Endothelial cell of umbilical vein (primary cell): ENCODE measurements at regions of chr17 and their contacts with region 1.

Region 1: DNA sequence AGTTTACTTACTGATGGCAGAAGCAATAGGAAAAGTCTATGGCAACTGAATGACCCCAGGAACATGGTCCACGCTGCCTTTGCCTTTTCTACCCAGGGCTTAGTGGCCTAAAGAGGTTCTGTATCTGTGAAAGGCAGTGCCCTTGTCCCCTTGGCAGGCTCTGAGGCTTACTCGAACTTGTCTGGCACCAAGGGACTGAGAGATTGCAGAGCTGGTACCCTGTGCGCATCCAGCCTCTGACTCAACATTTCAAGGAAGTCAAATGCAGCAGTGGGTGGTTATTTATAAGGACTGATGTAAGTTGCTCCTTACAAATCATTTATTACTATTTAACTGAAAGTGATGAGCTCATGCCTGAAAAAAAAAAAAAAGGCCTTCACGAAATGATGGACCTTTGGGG is 299.9 kb upstream of the MYOCD start:
- DNase-seq: no peak
- H3K4me3 ChIP-seq: no peak overlapping the region
- H3K27ac ChIP-seq: no peak overlapping the region
- H3K4me1 ChIP-seq: no peaks in the 10 kb centered on the region
- H3K27me3 ChIP-seq: no peaks in the 10 kb centered on the region
- CTCF ChIP-seq: no peak
- POLR2A ChIP-seq: no peak

Region 2: DNA sequence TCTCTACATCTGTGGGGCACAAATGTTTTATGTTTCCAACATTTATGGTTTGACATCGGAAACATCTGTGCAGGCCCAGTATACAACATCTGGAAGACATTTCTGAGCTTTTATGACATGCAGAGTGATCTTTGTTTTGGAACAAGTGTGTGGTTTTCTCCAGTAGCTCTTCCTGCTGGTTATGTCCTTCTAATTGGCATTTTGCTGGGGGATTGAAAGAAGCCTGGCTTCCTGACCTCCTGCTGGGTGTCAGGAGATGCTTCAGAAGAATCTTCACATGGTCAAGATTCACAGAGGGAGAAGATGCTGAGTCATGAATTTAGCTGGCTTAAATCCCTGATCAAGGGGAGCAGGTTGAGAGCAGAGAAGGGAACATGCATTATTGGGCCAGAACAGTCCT is 20.4 kb after region 1 on chr17:
- CTCF ChIA-PET with region 1: no interaction called
- POLR2A ChIA-PET with region 1: no interaction called
- dilution Hi-C with region 1: no loop called
- intact Hi-C with region 1: no loop called
- DNase-seq: no peak
- H3K4me3 ChIP-seq: no peak overlapping the region
- H3K27ac ChIP-seq: no peak overlapping the region
- H3K4me1 ChIP-seq: no peaks in the 10 kb centered on the region
- H3K27me3 ChIP-seq: no peaks in the 10 kb centered on the region
- CTCF ChIP-seq: no peak
- POLR2A ChIP-seq: no peak

Region 3: DNA sequence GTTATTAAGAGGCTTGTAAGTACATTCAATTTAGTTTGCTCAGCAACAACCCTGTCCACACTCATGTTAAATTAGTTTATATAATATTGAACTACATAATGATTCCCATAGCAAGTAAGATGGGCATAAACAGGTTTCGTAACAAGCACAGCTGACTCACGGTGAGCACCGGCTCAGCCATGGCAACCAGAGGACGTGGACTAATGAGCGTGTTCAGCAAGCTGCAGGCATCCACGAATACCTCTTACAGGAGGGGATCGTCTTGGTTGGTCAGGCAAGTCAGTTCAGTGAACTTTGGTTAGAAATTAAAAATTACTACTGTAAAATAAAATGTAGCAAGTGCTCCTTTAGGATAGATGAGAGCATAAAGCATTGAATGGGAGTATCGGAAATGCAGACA is 593.6 kb after region 1 on chr17:
- CTCF ChIA-PET with region 1: no interaction called
- POLR2A ChIA-PET with region 1: no interaction called
- dilution Hi-C with region 1: no loop called
- intact Hi-C with region 1: loop called (anchors 5 kb)
- DNase-seq: no peak
- H3K4me3 ChIP-seq: no peak overlapping the region
- H3K27ac ChIP-seq: no peak overlapping the region
- H3K4me1 ChIP-seq: no peaks in the 10 kb centered on the region
- H3K27me3 ChIP-seq: no peaks in the 10 kb centered on the region
- CTCF ChIP-seq: no peak
- POLR2A ChIP-seq: no peak